ENCODE measurements at regions of chr9 and their contacts with region 1.

Region 1: DNA sequence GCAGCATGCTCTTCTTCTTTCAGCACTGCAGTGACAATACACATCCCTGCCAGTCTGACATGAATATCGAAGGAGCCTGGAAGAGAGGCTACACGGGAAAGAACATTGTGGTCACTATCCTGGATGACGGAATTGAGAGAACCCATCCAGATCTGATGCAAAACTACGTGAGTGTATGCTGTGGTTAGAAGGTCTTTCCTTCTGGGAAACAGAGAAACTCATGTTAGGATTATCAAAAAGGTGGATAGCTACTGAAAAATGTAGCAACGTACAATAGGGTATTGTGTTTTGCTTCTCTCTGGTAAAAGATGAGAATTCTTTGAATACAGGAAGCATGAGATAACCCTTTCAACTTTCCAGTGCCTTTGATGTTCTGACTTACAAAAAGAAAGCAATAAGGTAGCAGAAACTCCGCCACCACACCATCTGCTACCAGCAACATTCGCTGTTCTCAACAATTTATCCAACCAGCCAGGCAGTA is 133.3 kb downstream of the PCSK5 start:
- DNase-seq: peak in 7 of 9 donors; percentile 69 to 87 (median 81)
- ATAC-seq: peak; percentile 93
- H3K4me3 ChIP-seq: peak overlapping the region; percentile 38
- H3K4me3 Mint-ChIP-seq: peak overlapping the region; percentile 68 to 86 (median 80)
- H3K27ac ChIP-seq: peak overlapping the region; percentile 76
- H3K27ac Mint-ChIP-seq: peak overlapping the region; percentile 77 to 99 (median 96)
- H3K4me1 ChIP-seq: peaks cover 10 to 96% of the 10 kb centered on the region in 2 donors
- H3K4me1 Mint-ChIP-seq: peaks cover 59 to 100% (median 98%) of the 10 kb centered on the region in 7 donors
- H3K27me3 ChIP-seq: no peaks in the 10 kb centered on the region
- H3K27me3 Mint-ChIP-seq: no peaks in the 10 kb centered on the region

Region 2: GRCh38 chr9:75148561-75148960 is 875.2 kb before region 1 on chr9:
- CTCF ChIA-PET with region 1: no interaction called
- POLR2A ChIA-PET with region 1: no interaction called
- intact Hi-C with region 1: loop called (anchors 5 to 10 kb)
- DNase-seq: peak in 1 of 9 donors; percentile 32
- ATAC-seq: no peak
- H3K4me3 ChIP-seq: peak overlapping the region; percentile 5
- H3K4me3 Mint-ChIP-seq: peak overlapping the region in 9 of 10 donors; percentile 20 to 88 (median 82)
- H3K27ac ChIP-seq: peak overlapping the region; percentile 47
- H3K27ac Mint-ChIP-seq: peak overlapping the region; percentile 81 to 97 (median 86)
- H3K4me1 ChIP-seq: peaks cover 66 to 69% of the 10 kb centered on the region in 2 donors
- H3K4me1 Mint-ChIP-seq: peaks cover 47 to 96% (median 86%) of the 10 kb centered on the region in 7 donors
- H3K27me3 ChIP-seq: no peaks in the 10 kb centered on the region
- H3K27me3 Mint-ChIP-seq: no peaks in the 10 kb centered on the region

Region 3: GRCh38 chr9:76044266-76044819 is 20.6 kb after region 1 on chr9:
- CTCF ChIA-PET with region 1: no interaction called
- POLR2A ChIA-PET with region 1: interaction called, 3 read pairs
- intact Hi-C with region 1: loop called in 1 of 2 experiments (anchors 2 kb)
- DNase-seq: no peak
- ATAC-seq: no peak
- H3K4me3 ChIP-seq: no peak overlapping the region
- H3K4me3 Mint-ChIP-seq: no peak overlapping the region
- H3K27ac ChIP-seq: no peak overlapping the region
- H3K27ac Mint-ChIP-seq: peak overlapping the region in 3 of 9 donors; percentile 0 to 7 (median 2)
- H3K4me1 ChIP-seq: no peaks in the 10 kb centered on the region
- H3K4me1 Mint-ChIP-seq: peaks cover 0 to 30% (median 13%) of the 10 kb centered on the region in 7 donors
- H3K27me3 ChIP-seq: no peaks in the 10 kb centered on the region
- H3K27me3 Mint-ChIP-seq: no peaks in the 10 kb centered on the region

Region 4: DNA sequence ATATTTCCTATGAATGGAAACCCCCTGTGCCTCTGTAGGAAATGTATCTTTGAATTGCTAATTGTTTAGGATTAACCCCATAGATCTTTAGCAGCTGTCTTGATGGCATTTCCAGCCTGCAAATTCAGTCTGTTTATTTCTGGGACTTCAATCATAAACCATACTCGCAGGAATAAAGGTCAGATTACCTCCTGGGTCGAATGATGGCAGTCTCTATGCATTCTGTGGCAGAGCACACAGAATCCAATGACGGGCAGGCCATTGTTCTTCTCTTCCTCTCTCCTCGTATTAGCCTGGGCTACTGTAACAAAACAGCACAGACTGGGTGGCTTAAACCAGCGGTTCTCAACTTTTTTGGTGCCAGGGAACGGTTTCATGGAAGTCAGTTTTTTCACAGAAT is 66.6 kb after region 1 on chr9:
- CTCF ChIA-PET with region 1: no interaction called
- POLR2A ChIA-PET with region 1: interaction called, 6 read pairs
- intact Hi-C with region 1: loop called in 1 of 2 experiments (anchors 2 kb)
- DNase-seq: no peak
- ATAC-seq: no peak
- H3K4me3 ChIP-seq: no peak overlapping the region
- H3K4me3 Mint-ChIP-seq: no peak overlapping the region
- H3K27ac ChIP-seq: no peak overlapping the region
- H3K27ac Mint-ChIP-seq: peak overlapping the region in 3 of 9 donors; percentile 2 to 83 (median 7)
- H3K4me1 ChIP-seq: no peaks in the 10 kb centered on the region
- H3K4me1 Mint-ChIP-seq: peaks cover 0 to 23% (median 9%) of the 10 kb centered on the region in 7 donors
- H3K27me3 ChIP-seq: no peaks in the 10 kb centered on the region
- H3K27me3 Mint-ChIP-seq: no peaks in the 10 kb centered on the region

Region 5: DNA sequence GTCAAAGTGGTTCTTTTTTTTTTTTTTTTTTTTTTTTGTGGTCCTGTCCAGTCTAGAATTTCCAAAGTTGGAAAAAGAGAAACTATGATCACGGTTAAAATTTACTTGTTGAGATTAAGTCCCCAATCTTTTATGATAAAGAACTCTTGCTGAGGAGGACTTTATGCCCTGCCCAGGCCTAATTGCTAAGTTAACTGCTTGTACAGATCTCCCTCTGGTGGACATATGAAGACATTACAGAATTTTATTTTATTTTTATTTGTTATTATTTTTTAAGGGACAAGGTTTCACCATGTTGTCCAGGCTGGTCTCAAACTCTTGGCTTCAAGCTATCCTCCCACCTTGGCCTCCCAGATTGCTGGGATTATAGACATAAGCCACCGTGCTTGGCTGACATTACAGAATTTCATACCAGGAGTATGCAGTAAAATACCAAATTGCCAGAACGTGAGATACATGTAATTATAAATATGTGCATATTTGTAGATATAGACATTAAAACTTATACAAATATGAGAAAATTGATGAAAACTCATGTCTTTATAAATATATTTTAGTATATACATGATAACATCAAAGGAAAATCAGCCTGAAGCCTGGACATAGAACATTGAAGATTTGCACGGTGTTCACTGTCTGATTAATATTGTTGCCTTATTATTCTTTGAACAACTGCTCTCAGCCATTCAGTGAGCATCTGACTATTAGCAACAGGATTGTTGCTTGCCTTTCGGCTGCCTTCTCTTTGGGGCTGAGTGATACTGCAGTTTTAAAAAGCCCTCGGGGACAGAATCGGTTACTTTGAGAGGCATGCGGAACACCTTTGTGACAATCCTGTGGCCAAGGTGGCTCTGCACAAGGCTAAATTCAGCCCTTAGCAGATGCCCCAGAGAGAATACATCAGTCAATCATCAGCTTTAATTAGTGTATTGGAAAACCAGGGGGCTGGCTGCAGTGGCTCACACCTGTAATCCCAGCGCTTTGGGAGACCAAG is 279.5 kb after region 1 on chr9:
- CTCF ChIA-PET with region 1: no interaction called
- POLR2A ChIA-PET with region 1: no interaction called
- intact Hi-C with region 1: loop called (anchors 2 kb)
- DNase-seq: peak in 6 of 9 donors; percentile 28 to 60 (median 54)
- ATAC-seq: peak; percentile 75
- H3K4me3 ChIP-seq: no peak overlapping the region
- H3K4me3 Mint-ChIP-seq: no peak overlapping the region
- H3K27ac ChIP-seq: no peak overlapping the region
- H3K27ac Mint-ChIP-seq: no peak overlapping the region
- H3K4me1 ChIP-seq: no peaks in the 10 kb centered on the region
- H3K4me1 Mint-ChIP-seq: peaks cover 0 to 3% (median 0%) of the 10 kb centered on the region in 7 donors
- H3K27me3 ChIP-seq: no peaks in the 10 kb centered on the region
- H3K27me3 Mint-ChIP-seq: peaks cover 0 to 17% (median 7%) of the 10 kb centered on the region in 5 donors